AG04450 (cell line): ENCODE measurements at regions of chr17 and their contacts with region 1.

Region 1: GRCh38 chr17:15257258-15257788 is 7.8 kb downstream of the PMP22 start:
- DNase-seq: peak; percentile 38
- H3K4me3 ChIP-seq: peak overlapping the region; percentile 36
- H3K27ac ChIP-seq: no peak overlapping the region
- H3K27me3 ChIP-seq: no peaks in the 10 kb centered on the region
- CTCF ChIP-seq: peak; percentile 90

Region 2: GRCh38 chr17:15123593-15124263 is 133.6 kb before region 1 on chr17:
- CTCF ChIA-PET with region 1: no interaction called
- POLR2A ChIA-PET with region 1: no interaction called
- DNase-seq: no peak
- H3K4me3 ChIP-seq: no peak overlapping the region
- H3K27ac ChIP-seq: no peak overlapping the region
- H3K27me3 ChIP-seq: no peaks in the 10 kb centered on the region
- CTCF ChIP-seq: no peak

Region 3: GRCh38 chr17:15436473-15437302 is 179.4 kb after region 1 on chr17:
- CTCF ChIA-PET with region 1: interaction called, 9 read pairs
- POLR2A ChIA-PET with region 1: interaction called, 11 read pairs
- DNase-seq: peak; percentile 13
- H3K4me3 ChIP-seq: no peak overlapping the region
- H3K27ac ChIP-seq: peak overlapping the region; percentile 24
- H3K27me3 ChIP-seq: no peaks in the 10 kb centered on the region
- CTCF ChIP-seq: peak; percentile 51

Region 4: DNA sequence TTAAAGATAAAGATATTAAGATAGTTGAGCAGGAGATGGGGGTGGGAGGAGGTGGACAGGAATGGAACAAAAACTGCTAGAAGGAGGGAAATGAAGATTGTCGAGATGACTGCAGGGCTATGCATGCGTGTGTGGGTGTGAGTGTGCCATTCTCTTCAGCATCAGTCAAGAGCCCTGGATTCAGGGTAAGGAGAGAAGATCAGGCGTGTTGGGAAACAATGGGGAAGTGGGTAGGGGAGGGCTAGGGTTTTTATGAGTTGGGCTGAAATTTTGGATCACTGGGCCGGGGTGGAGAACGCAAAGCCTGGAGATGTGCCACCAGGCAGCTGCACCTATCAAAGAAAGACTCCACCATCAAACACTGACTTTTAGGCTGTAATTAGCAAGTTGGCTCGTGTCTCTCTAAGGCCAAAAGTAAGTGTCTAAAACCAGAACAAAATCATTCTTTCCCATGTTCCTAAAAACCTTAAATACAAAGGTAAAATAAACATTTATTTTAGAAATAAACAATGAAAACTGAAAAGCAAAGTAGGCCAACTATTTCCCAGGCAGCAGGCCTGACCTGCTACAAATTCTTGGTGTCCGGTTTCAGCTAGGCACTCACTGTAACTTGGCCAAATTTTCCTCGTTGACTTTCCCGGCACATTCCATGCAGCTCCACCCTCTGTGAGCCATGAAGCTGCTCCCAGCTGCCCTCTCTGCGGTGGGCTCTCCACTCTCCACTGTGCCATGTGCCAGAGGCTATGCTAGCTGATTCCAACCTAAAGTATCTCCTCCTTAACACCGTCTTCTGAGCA is 205.9 kb after region 1 on chr17:
- CTCF ChIA-PET with region 1: interaction called, 23 read pairs
- POLR2A ChIA-PET with region 1: interaction called, 13 read pairs
- DNase-seq: peak; percentile 87
- H3K4me3 ChIP-seq: no peak overlapping the region
- H3K27ac ChIP-seq: peak overlapping the region; percentile 89
- H3K27me3 ChIP-seq: no peaks in the 10 kb centered on the region
- CTCF ChIP-seq: no peak